ENCODE measurements at regions of chr3 and their contacts with region 1.

Region 1: DNA sequence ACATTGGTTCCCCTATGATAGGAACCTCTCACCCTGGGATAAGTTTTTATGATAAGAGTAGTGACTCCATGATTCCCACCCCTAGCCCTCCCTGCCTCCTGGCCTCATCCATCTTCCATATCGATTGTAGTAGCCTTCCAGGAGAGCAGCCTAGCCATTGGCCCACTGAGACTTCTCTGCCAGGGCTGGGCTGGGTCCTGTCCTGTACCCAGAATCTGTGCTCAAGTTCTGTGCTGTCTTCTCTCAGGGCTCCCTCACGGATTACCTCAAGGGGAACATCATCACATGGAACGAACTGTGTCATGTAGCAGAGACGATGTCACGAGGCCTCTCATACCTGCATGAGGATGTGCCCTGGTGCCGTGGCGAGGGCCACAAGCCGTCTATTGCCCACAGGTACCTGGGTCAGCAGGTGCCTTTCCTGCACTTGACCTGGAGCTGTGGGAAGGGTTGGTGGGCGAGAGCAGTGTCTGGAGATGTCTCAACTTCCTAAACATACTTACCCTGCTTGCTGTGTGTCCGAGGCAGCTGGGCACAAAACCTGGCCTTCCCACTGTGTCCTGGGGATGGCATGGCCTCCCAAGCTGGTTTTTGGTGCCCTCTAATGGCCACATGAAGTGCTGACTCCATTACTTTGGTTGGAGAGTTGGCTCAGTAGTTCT is 16.6 kb upstream of the EXOG start:
- DNase-seq: peak; percentile 87
- H3K4me3 ChIP-seq: no peak overlapping the region
- H3K27ac ChIP-seq: no peak overlapping the region
- H3K4me1 ChIP-seq: peaks cover 0 to 20% of the 10 kb centered on the region in 2 experiments; a peak in 1 of 4 replicates
- H3K27me3 ChIP-seq: no peaks in the 10 kb centered on the region
- CTCF ChIP-seq: peak; percentile 95
- EP300 ChIP-seq: no peak
- RAD21 ChIP-seq: peak; percentile 96

Region 2: GRCh38 chr3:38117748-38118420 is 361.7 kb before region 1 on chr3:
- CTCF ChIA-PET with region 1: interaction called, 27 read pairs
- POLR2A ChIA-PET with region 1: no interaction called
- DNase-seq: peak; percentile 80
- H3K4me3 ChIP-seq: no peak overlapping the region
- H3K27ac ChIP-seq: no peak overlapping the region
- H3K4me1 ChIP-seq: no peaks in the 10 kb centered on the region
- H3K27me3 ChIP-seq: no peaks in the 10 kb centered on the region
- CTCF ChIP-seq: peak; percentile 70
- EP300 ChIP-seq: no peak
- RAD21 ChIP-seq: peak; percentile 74

Region 3: GRCh38 chr3:38454884-38455638 is 24.5 kb before region 1 on chr3:
- CTCF ChIA-PET with region 1: interaction called, 16 read pairs
- POLR2A ChIA-PET with region 1: no interaction called
- DNase-seq: peak; percentile 96
- H3K4me3 ChIP-seq: peak overlapping the region; percentile 84 to 87
- H3K27ac ChIP-seq: peak overlapping the region; percentile 48 to 92; a peak in 3 of 4 replicates
- H3K4me1 ChIP-seq: peaks cover 0 to 37% of the 10 kb centered on the region in 2 experiments; a peak in 2 of 4 replicates
- H3K27me3 ChIP-seq: no peaks in the 10 kb centered on the region
- CTCF ChIP-seq: no peak
- EP300 ChIP-seq: no peak
- RAD21 ChIP-seq: no peak

Region 4: GRCh38 chr3:38490281-38491030 is 10.9 kb after region 1 on chr3:
- CTCF ChIA-PET with region 1: interaction called, 27 read pairs
- POLR2A ChIA-PET with region 1: no interaction called
- DNase-seq: no peak
- H3K4me3 ChIP-seq: no peak overlapping the region
- H3K27ac ChIP-seq: no peak overlapping the region
- H3K4me1 ChIP-seq: peaks cover 0 to 7% of the 10 kb centered on the region in 2 experiments; a peak in 1 of 4 replicates
- H3K27me3 ChIP-seq: no peaks in the 10 kb centered on the region
- CTCF ChIP-seq: no peak
- EP300 ChIP-seq: no peak
- RAD21 ChIP-seq: no peak

Region 5: DNA sequence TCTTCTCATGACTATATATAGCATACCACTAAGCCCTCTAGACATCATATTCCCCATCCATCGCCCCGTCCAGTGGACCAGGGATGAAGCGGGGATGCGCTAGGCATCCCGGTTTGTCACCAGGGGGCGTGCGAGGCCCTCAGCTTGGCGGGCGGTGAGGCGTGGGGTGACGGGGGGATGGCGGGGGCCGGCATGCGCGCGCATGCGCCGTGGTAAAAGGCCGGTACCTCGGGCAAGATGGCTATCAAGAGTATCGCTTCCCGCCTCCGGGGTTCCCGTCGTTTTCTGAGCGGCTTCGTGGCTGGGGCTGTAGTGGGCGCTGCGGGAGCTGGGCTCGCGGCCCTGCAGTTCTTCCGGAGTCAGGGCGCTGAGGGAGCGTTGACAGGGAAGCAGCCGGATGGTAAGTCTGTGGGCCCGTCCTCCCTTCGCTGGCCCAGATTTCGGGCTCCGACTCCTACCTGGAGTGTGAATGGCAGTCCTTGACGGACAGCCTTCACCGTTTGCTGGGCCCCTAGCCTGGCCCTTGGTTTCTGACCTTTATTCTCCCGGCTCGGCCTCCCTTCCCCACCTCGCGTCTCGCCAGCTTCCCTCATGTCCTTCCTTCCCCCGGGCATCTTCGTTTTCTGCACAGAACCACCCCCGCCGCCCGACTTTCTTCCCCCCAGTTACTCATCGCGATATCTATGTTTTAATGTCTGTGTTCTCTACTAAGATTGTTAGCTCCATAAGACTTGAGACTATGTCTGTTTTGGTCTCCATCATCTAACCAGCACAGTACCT is 16.8 kb after region 1 on chr3 and contains the start of gene EXOG:
- CTCF ChIA-PET with region 1: interaction called, 27 read pairs
- POLR2A ChIA-PET with region 1: no interaction called
- DNase-seq: peak; percentile 98
- H3K4me3 ChIP-seq: peak within 1 kb of the TSS; percentile 55 to 75
- H3K27ac ChIP-seq: peak within 1 kb of the TSS; percentile 59 to 77; a peak in 3 of 4 replicates
- H3K4me1 ChIP-seq: peaks cover 0 to 4% of the 10 kb centered on the region in 2 experiments; a peak in 3 of 4 replicates
- H3K27me3 ChIP-seq: no peaks in the 10 kb centered on the region
- CTCF ChIP-seq: peak; percentile 91
- EP300 ChIP-seq: peak in 1 of 2 experiments; percentile 13; a peak in 1 of 4 replicates
- RAD21 ChIP-seq: peak; percentile 81
- polyA plus RNA-seq, gene EXOG: 6.2 and 8.8 TPM in 2 replicates

Measured in SK-N-SH (cell line).